Activated B cell treated with CpG ODN at 0.5 μM for 24 hours (primary cell): ENCODE measurements at regions of chr5 and their contacts with region 1.

Region 1: DNA sequence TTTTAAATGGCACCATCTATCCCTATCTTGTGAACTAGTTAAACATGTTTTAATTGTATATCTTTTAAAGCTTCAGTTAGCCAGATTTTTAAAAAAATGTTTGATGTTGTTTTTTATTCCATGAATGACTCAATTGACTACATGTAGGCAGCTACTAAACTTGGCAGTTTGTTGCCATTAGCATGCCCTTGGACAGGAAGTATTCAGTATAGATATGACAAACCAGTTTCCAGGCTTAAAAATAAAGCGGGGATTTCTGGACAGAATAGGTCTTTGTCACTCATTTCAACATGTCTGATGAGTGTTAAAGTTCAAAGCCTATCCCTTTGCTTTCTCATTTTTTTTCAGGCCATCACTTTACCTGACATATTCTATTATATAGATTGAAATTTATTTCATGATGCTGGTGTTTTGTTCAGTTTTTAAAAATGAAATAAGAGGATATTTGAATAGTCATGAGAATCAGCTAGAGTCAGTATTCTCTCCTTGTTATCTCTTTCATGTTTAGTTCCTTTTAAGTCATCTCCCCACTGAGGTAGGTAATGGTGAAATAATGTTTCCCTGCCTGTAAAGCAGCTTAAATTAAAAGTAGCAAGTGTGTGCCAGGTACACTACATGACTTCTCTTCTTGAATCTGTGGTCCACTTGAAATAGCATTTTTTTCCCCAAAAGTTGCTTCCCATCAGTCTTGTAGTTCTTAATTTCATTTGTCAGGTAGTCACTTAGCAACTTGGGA is 11.9 kb downstream of the TNFAIP8 start:
- DNase-seq: no peak
- ATAC-seq: peak; percentile 68
- H3K4me3 Mint-ChIP-seq: peak overlapping the region; percentile 71
- H3K27ac Mint-ChIP-seq: peak overlapping the region; percentile 84
- H3K4me1 Mint-ChIP-seq: peaks cover 89% of the 10 kb centered on the region
- H3K27me3 Mint-ChIP-seq: no peaks in the 10 kb centered on the region
- CTCF ChIP-seq: no peak

Region 2: GRCh38 chr5:119274767-119275130 is 92.9 kb before region 1 on chr5:
- CTCF ChIA-PET with region 1: interaction called, 3 read pairs
- POLR2A ChIA-PET with region 1: interaction called, 3 read pairs
- intact Hi-C with region 1: loop called (anchors 1 kb)
- DNase-seq: no peak
- ATAC-seq: peak; percentile 42
- H3K4me3 Mint-ChIP-seq: peak overlapping the region; percentile 78
- H3K27ac Mint-ChIP-seq: peak overlapping the region; percentile 89
- H3K4me1 Mint-ChIP-seq: peaks cover 97% of the 10 kb centered on the region
- H3K27me3 Mint-ChIP-seq: no peaks in the 10 kb centered on the region
- CTCF ChIP-seq: no peak

Region 3: GRCh38 chr5:119328753-119329602 is 38.7 kb before region 1 on chr5:
- CTCF ChIA-PET with region 1: no interaction called
- POLR2A ChIA-PET with region 1: interaction called, 388 read pairs
- intact Hi-C with region 1: loop called (anchors 5 kb)
- DNase-seq: no peak
- ATAC-seq: no peak
- H3K4me3 Mint-ChIP-seq: no peak overlapping the region
- H3K27ac Mint-ChIP-seq: peak overlapping the region; percentile 69
- H3K4me1 Mint-ChIP-seq: peaks cover 94% of the 10 kb centered on the region
- H3K27me3 Mint-ChIP-seq: no peaks in the 10 kb centered on the region
- CTCF ChIP-seq: no peak

Region 4: GRCh38 chr5:119379942-119380547 is 12.4 kb after region 1 on chr5:
- CTCF ChIA-PET with region 1: no interaction called
- POLR2A ChIA-PET with region 1: interaction called, 7 read pairs
- intact Hi-C with region 1: loop called (anchors 1 kb)
- DNase-seq: no peak
- ATAC-seq: peak; percentile 66
- H3K4me3 Mint-ChIP-seq: no peak overlapping the region
- H3K27ac Mint-ChIP-seq: peak overlapping the region; percentile 68
- H3K4me1 Mint-ChIP-seq: peaks cover 81% of the 10 kb centered on the region
- H3K27me3 Mint-ChIP-seq: no peaks in the 10 kb centered on the region
- CTCF ChIP-seq: no peak

Region 5: DNA sequence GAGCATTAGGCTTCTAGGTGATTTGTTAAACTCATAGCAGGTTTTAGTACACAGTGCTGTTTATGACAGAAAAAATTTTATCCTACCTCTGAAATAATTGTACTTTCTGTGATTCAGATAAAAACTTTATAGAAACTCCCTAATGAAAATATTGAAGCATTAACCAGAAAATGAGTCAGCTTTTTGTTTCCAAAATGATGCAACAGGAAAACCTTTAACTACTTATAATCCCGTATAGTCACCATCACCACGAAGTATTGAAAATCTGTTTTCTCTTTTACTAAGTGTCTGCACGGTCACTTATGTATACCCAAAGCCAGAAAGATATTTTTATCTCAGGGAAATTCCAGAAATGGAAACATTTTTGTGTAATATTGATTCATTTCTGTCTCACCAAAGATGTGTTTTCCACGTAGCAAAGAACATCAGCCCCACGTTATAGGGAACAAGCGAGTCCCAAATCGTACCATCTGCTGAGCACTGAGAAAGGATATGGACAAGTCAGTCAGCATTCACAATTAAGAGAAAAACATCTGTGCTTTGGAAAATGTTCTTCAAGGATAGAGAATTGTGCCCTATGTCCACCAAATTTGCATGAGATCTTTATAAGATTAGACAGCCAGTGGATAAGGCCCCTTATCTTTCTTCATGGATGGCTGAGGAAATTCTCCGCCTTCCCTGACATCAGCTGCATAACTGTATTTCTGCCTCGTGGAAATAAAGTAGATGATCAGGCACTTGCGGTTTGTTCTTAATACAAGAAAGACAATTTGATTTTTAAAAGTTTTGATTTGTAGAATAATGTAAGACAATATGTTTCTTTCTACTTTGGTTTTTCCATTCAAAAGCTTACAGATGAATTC is 30.1 kb after region 1 on chr5:
- CTCF ChIA-PET with region 1: no interaction called
- POLR2A ChIA-PET with region 1: interaction called, 11 read pairs
- intact Hi-C with region 1: loop called (anchors 2 kb)
- DNase-seq: no peak
- ATAC-seq: peak; percentile 45
- H3K4me3 Mint-ChIP-seq: peak overlapping the region; percentile 67
- H3K27ac Mint-ChIP-seq: peak overlapping the region; percentile 80
- H3K4me1 Mint-ChIP-seq: peaks cover 88% of the 10 kb centered on the region
- H3K27me3 Mint-ChIP-seq: no peaks in the 10 kb centered on the region
- CTCF ChIP-seq: no peak

Region 6: GRCh38 chr5:120368923-120369715 is 1001.4 kb after region 1 on chr5:
- CTCF ChIA-PET with region 1: no interaction called
- POLR2A ChIA-PET with region 1: no interaction called
- intact Hi-C with region 1: no loop called
- DNase-seq: no peak
- ATAC-seq: no peak
- H3K4me3 Mint-ChIP-seq: no peak overlapping the region
- H3K27ac Mint-ChIP-seq: no peak overlapping the region
- H3K4me1 Mint-ChIP-seq: no peaks in the 10 kb centered on the region
- H3K27me3 Mint-ChIP-seq: no peaks in the 10 kb centered on the region
- CTCF ChIP-seq: no peak